ENCODE measurements at regions of chr4 and their contacts with region 1.

Region 1: GRCh38 chr4:108483079-108483478 is 137.3 kb upstream of the RPL34 start:
- DNase-seq: no peak
- H3K4me3 Mint-ChIP-seq: peak overlapping the region; percentile 46
- H3K27ac Mint-ChIP-seq: peak overlapping the region; percentile 37
- H3K4me1 Mint-ChIP-seq: peaks cover 56% of the 10 kb centered on the region
- H3K27me3 Mint-ChIP-seq: no peaks in the 10 kb centered on the region

Region 2: DNA sequence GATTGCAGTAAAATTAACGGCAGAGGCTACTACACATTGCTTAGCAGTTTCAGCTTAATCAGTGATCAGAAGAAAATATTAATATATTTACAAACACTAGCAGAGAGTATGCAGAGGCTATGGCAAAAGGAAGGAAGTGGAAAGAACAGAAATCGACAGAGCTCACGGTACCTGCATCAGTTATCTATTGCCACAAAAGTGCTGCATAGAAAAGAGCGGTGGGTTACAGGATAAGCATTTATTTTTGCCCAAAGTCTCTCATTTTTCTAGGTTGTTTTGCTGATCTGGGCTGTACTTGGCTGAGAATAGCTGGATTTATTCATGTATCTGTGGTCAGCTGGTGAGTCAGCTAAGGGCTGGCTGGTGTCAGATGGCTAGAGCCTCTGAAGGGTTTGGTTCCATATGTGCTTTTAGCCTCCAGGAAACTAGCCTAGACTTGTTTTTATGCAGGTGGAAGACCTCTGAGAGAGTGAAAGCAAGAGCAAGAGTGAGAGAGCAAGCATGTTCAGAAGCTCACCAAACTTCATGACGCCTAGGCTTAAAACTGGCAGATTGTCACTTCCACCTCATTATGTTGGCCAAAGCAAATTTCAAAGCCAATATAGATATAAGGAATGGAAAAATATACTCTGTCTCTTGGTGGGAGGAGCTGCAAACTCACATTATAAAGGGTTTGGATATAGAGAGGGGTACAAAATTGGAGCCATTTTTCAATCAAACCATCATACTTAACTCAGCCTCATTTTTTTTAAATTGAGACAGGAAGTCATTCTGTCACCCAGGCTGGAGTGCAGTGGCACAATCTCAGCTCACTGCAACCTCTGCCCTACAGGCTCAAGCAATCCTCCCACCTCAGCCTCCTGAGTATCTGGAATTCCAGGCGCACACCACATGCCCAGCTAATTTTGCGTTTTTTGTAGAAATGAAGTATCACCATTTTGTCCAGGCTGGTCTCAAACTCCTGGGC is 15.9 kb before region 1 on chr4:
- intact Hi-C with region 1: loop called (anchors 2 kb)
- DNase-seq: peak; percentile 23
- H3K4me3 Mint-ChIP-seq: peak overlapping the region; percentile 69
- H3K27ac Mint-ChIP-seq: peak overlapping the region; percentile 87
- H3K4me1 Mint-ChIP-seq: peaks cover 37% of the 10 kb centered on the region
- H3K27me3 Mint-ChIP-seq: peaks cover 5% of the 10 kb centered on the region

Region 3: DNA sequence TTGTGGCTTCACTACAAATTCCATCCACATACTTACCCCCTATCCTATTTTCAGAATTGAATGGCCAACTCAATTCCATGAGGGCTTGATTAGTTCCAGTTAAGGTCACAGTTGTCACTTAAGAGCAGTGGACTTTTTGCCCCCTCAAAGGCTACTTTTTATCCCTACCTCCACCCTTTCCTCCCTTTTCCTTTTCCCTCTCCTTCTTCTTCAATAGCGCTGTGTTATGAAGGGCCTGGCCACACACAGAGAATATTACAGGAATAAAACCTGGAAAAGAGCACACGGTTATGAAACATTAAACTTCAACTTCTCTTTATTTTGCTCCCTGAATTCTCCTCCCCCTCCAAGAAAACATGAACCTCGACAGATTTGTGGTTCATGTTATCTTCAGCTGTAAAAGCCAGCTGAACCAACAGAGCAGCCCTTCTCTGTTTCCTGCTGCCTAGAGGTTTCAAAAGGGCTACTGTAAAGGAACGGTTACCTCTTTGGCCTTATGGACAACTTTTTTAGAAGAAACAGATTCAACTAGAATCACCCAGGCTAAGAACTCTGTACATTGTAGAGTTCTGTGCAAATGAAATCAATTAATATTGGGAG is 50.3 kb after region 1 on chr4:
- intact Hi-C with region 1: loop called (anchors 5 kb)
- DNase-seq: no peak
- H3K4me3 Mint-ChIP-seq: peak overlapping the region; percentile 41
- H3K27ac Mint-ChIP-seq: peak overlapping the region; percentile 40
- H3K4me1 Mint-ChIP-seq: peaks cover 84% of the 10 kb centered on the region
- H3K27me3 Mint-ChIP-seq: no peaks in the 10 kb centered on the region

Measured in activated T-helper 1 cell treated with anti-CD3 and anti-CD28 coated beads, Interleukin-12 subunit alpha, Interleukin-12 subunit beta, Interleukin-2, Interleukin-4 antibody, amounts not matched to agents 30 ng/mL and 10 ng/mL and 1 ng/mL, durations not matched to agents 14 hours and 24 hours and 36 hours (primary cell).